ENCODE measurements at regions of chr7 and their contacts with region 1.

Region 1: GRCh38 chr7:27160546-27161213 is 4.2 kb upstream of the HOXA7 start:
- DNase-seq: peak; percentile 76
- H3K4me3 Mint-ChIP-seq: peak overlapping the region; percentile 58
- H3K27ac Mint-ChIP-seq: no peak overlapping the region
- H3K4me1 Mint-ChIP-seq: peaks cover 9% of the 10 kb centered on the region
- H3K27me3 Mint-ChIP-seq: peaks cover 82% of the 10 kb centered on the region

Region 2: DNA sequence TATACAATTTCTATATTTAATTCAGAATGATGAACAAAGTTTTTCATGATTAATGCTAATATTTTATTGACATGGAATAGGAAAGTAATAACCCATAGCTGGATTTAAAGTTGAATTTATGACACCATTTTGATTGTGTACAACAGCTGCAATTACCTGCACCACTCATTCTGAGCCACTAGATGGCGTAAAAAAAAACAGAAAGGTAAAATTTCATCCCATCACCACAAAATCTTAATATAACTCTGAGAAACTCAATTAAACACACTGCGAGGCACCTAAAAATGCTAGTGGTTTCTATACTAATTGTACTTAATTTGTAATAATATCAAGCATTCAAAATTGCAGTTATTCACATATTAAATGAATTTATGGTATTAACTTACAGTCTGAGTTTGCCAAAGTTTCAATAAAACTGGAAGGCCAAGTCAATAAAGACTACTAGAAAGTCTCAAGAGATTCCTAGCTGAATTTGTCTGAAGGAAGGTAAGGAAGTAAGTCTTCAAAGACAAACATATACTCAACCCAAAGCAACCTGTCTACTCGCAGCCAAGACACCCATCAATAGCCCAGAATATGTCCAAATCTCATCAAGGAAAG is 478.8 kb before region 1 on chr7:
- CTCF ChIA-PET with region 1: interaction called, 15 read pairs
- POLR2A ChIA-PET with region 1: no interaction called
- DNase-seq: peak; percentile 17
- H3K4me3 Mint-ChIP-seq: no peak overlapping the region
- H3K27ac Mint-ChIP-seq: no peak overlapping the region
- H3K4me1 Mint-ChIP-seq: peaks cover 1% of the 10 kb centered on the region
- H3K27me3 Mint-ChIP-seq: peaks cover 28% of the 10 kb centered on the region

Region 3: DNA sequence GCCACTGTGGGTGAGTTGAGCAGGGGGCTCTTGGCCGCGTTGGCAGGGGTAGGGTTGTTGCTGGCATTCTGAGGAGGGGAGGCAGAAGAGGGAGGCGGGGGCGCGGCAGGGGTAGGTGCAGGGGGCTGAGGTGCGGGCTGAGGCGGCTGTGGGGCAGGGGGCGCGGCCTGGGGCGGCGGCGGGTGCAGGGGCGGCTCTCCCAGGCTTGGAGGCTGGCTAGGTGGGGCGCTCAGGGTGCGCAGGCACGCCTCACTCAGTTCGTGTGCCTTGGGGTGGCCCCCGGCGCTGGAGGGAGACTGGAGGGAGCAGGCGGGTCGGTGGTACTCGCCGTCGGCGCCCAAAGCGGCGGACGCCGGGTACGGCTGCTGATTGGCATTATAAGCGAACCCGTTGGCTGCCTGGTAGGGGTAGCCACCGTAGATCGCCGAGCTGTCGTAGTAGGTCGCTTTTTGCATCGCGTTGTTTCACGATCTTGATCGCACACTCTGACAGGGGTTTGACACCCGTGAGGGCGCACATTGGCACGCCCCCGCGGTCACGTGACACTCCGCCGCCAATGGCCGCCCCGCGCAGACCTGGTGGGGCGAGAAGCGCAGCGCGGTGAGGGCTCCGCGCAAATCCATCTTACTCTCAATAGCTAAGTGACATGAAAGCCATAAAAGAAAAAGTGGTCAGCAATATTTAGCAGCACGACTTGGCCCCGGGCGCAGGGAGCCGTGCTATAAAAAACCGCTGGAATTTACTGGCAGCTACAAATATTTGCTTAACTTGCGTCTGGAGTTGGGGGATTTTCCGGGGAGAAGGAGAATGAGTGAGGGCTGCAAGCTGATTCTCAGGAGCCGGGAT is 50.3 kb before region 1 on chr7:
- CTCF ChIA-PET with region 1: no interaction called
- POLR2A ChIA-PET with region 1: no interaction called
- DNase-seq: no peak
- H3K4me3 Mint-ChIP-seq: no peak overlapping the region
- H3K27ac Mint-ChIP-seq: no peak overlapping the region
- H3K4me1 Mint-ChIP-seq: no peaks in the 10 kb centered on the region
- H3K27me3 Mint-ChIP-seq: peaks cover 8% of the 10 kb centered on the region

Region 4: GRCh38 chr7:27262121-27262520 is 101.4 kb after region 1 on chr7:
- CTCF ChIA-PET with region 1: no interaction called
- POLR2A ChIA-PET with region 1: no interaction called
- DNase-seq: no peak
- H3K4me3 Mint-ChIP-seq: no peak overlapping the region
- H3K27ac Mint-ChIP-seq: no peak overlapping the region
- H3K4me1 Mint-ChIP-seq: no peaks in the 10 kb centered on the region
- H3K27me3 Mint-ChIP-seq: peaks cover 10% of the 10 kb centered on the region

Region 5: GRCh38 chr7:27324246-27324645 is 163.6 kb after region 1 on chr7:
- CTCF ChIA-PET with region 1: no interaction called
- POLR2A ChIA-PET with region 1: no interaction called
- DNase-seq: no peak
- H3K4me3 Mint-ChIP-seq: no peak overlapping the region
- H3K27ac Mint-ChIP-seq: no peak overlapping the region
- H3K4me1 Mint-ChIP-seq: no peaks in the 10 kb centered on the region
- H3K27me3 Mint-ChIP-seq: peaks cover 12% of the 10 kb centered on the region

Measured in activated CD4-positive, alpha-beta T cell treated with anti-CD3 and anti-CD28 coated beads, Interleukin-2, amount 10 ng/mL, durations not matched to agents 7 days and 5 days (primary cell).